ENCODE measurements at regions of chr4 and their contacts with region 1.

Region 1: GRCh38 chr4:118076958-118077766 is 42.9 kb downstream of the NDST3 start:
- DNase-seq: peak; percentile 46 to 48
- H3K4me3 ChIP-seq: no peak overlapping the region
- H3K4me3 Mint-ChIP-seq: no peak overlapping the region
- H3K27ac Mint-ChIP-seq: no peak overlapping the region
- H3K4me1 ChIP-seq: no peaks in the 10 kb centered on the region
- H3K4me1 Mint-ChIP-seq: no peaks in the 10 kb centered on the region
- H3K27me3 ChIP-seq: no peaks in the 10 kb centered on the region
- H3K27me3 Mint-ChIP-seq: peaks cover 4% of the 10 kb centered on the region
- CTCF ChIP-seq: peak; percentile 56 to 70

Region 2: GRCh38 chr4:118270492-118270891 is 193.3 kb after region 1 on chr4:
- CTCF ChIA-PET with region 1: no interaction called
- POLR2A ChIA-PET with region 1: no interaction called
- intact Hi-C with region 1: loop called (anchors 1 kb)
- DNase-seq: peak in 1 of 2 experiments; percentile 20
- H3K4me3 ChIP-seq: no peak overlapping the region
- H3K4me3 Mint-ChIP-seq: no peak overlapping the region
- H3K27ac Mint-ChIP-seq: no peak overlapping the region
- H3K4me1 ChIP-seq: no peaks in the 10 kb centered on the region
- H3K4me1 Mint-ChIP-seq: no peaks in the 10 kb centered on the region
- H3K27me3 ChIP-seq: no peaks in the 10 kb centered on the region
- H3K27me3 Mint-ChIP-seq: no peaks in the 10 kb centered on the region
- CTCF ChIP-seq: peak; percentile 29 to 36